Activated naive CD4-positive, alpha-beta T cell treated with anti-CD3 and anti-CD28 coated beads for 36 hours (primary cell): ENCODE measurements at regions of chr17 and their contacts with region 1.

Region 1: GRCh38 chr17:66200685-66201092 is 8.8 kb upstream of the CEP112 start:
- DNase-seq: peak; percentile 76
- H3K4me3 Mint-ChIP-seq: no peak overlapping the region
- H3K27ac Mint-ChIP-seq: no peak overlapping the region
- H3K4me1 Mint-ChIP-seq: peaks cover 16% of the 10 kb centered on the region
- H3K27me3 Mint-ChIP-seq: no peaks in the 10 kb centered on the region

Region 2: DNA sequence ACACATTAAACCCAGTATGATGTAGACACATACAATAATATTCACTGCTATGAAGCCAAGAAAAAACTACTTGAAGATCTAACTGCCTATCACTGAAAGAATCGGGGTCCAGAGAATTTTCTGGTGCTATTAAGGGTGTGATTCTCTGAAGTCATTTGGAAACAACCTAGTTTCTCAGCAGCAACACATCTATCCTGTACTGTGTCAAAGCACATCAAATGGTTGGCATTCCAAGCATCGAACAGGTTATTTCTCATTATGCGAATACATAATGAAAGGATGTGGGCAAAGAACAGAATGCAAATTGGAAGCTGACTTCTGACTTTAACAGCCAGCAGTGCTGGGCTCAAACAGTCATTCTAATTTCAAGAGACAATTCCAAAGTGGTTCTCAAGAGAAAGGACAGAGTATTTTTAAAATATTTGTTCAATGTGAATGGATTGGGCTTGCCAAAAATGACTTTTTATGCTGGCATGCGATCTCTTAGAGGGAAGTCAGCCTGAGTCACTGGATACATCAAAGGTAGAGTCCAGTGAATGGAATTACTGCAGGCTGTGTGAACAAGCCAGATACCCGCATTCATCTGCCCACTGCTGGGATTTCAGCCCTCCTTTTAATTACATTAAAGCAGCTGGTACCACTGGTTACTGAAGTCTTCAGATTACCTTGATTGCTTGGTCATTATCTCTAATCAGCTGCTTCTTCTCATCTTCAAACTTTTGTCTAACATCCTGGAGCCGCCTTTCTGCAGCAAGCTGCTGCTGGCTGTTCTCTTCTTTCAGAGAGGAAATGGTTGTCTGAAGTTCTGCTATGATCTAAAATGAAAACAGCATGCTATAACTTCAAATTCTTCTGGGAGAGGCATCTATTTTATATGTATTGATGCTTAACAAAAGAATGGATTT is 458.0 kb before region 1 on chr17:
- CTCF ChIA-PET with region 1: no interaction called
- intact Hi-C with region 1: no loop called
- DNase-seq: peak; percentile 14
- H3K4me3 Mint-ChIP-seq: no peak overlapping the region
- H3K27ac Mint-ChIP-seq: peak overlapping the region; percentile 39
- H3K4me1 Mint-ChIP-seq: peaks cover 22% of the 10 kb centered on the region
- H3K27me3 Mint-ChIP-seq: no peaks in the 10 kb centered on the region

Region 3: DNA sequence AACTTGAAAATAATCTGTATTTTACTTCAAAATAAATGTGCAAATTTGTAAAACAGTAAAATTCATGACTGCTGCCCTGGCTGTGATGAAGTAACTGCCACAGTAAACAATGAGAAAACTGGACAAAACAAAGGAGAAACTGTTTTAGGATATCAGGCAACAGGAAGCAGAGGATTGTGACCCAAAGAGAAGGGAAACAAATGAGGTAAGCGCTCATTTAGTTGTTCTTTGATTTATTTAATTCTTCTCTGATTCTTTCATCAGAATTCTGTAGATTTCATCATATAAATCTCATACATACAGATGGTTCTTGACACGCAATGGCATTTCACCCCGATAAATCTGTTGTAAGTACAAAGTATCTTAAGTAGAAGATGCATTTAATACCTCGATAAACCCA is 441.2 kb before region 1 on chr17:
- CTCF ChIA-PET with region 1: no interaction called
- intact Hi-C with region 1: no loop called
- DNase-seq: no peak
- H3K4me3 Mint-ChIP-seq: no peak overlapping the region
- H3K27ac Mint-ChIP-seq: no peak overlapping the region
- H3K4me1 Mint-ChIP-seq: no peaks in the 10 kb centered on the region
- H3K27me3 Mint-ChIP-seq: no peaks in the 10 kb centered on the region

Region 4: GRCh38 chr17:66248285-66248684 is 47.6 kb after region 1 on chr17:
- CTCF ChIA-PET with region 1: interaction called, 3 read pairs
- intact Hi-C with region 1: loop called (anchors 2 kb)
- DNase-seq: no peak
- H3K4me3 Mint-ChIP-seq: no peak overlapping the region
- H3K27ac Mint-ChIP-seq: no peak overlapping the region
- H3K4me1 Mint-ChIP-seq: peaks cover 22% of the 10 kb centered on the region
- H3K27me3 Mint-ChIP-seq: no peaks in the 10 kb centered on the region

Region 5: DNA sequence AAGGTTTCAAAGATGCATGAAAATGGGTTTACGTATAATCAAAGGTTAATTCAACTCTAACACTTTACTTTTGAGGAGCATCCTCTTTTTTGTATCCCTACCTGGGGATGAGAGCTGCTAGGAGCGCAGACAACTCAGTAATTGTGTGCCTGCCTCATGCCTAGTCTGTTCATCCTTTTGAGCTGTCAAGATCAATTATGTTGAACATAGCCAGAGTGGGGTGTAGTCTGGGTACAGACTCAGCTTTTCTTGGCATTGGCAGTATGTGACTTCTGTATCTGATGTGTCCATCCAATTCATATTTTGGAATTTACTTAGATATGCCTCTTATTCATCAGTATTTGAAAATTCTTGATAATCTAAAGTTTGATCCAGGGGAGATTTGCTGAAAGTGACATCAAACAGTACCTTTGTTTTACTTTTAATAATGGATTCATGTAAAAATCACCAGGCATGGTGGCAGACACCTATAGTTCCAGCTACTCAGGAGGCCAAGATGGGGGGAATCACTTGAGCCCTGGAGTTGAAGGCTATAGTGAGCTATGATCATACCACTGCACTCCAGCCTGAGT is 125.9 kb after region 1 on chr17:
- CTCF ChIA-PET with region 1: no interaction called
- intact Hi-C with region 1: no loop called
- DNase-seq: no peak
- H3K4me3 Mint-ChIP-seq: no peak overlapping the region
- H3K27ac Mint-ChIP-seq: peak overlapping the region; percentile 27
- H3K4me1 Mint-ChIP-seq: peaks cover 77% of the 10 kb centered on the region
- H3K27me3 Mint-ChIP-seq: no peaks in the 10 kb centered on the region

Region 6: GRCh38 chr17:66369830-66370229 is 169.1 kb after region 1 on chr17:
- CTCF ChIA-PET with region 1: no interaction called
- intact Hi-C with region 1: no loop called
- DNase-seq: no peak
- H3K4me3 Mint-ChIP-seq: no peak overlapping the region
- H3K27ac Mint-ChIP-seq: no peak overlapping the region
- H3K4me1 Mint-ChIP-seq: peaks cover 85% of the 10 kb centered on the region
- H3K27me3 Mint-ChIP-seq: no peaks in the 10 kb centered on the region

Region 7: GRCh38 chr17:66426397-66427033 is 225.8 kb after region 1 on chr17:
- CTCF ChIA-PET with region 1: interaction called, 3 read pairs
- intact Hi-C with region 1: loop called (anchors 1 kb)
- DNase-seq: peak; percentile 68
- H3K4me3 Mint-ChIP-seq: no peak overlapping the region
- H3K27ac Mint-ChIP-seq: peak overlapping the region; percentile 83
- H3K4me1 Mint-ChIP-seq: peaks cover 81% of the 10 kb centered on the region
- H3K27me3 Mint-ChIP-seq: no peaks in the 10 kb centered on the region

Region 8: GRCh38 chr17:66633317-66633965 is 432.8 kb after region 1 on chr17:
- CTCF ChIA-PET with region 1: no interaction called
- intact Hi-C with region 1: loop called (anchors 5 kb)
- DNase-seq: peak; percentile 78
- H3K4me3 Mint-ChIP-seq: no peak overlapping the region
- H3K27ac Mint-ChIP-seq: peak overlapping the region; percentile 44
- H3K4me1 Mint-ChIP-seq: peaks cover 62% of the 10 kb centered on the region
- H3K27me3 Mint-ChIP-seq: no peaks in the 10 kb centered on the region

Region 9: GRCh38 chr17:66715745-66716156 is 515.1 kb after region 1 on chr17:
- CTCF ChIA-PET with region 1: no interaction called
- intact Hi-C with region 1: loop called (anchors 5 kb)
- DNase-seq: peak; percentile 12
- H3K4me3 Mint-ChIP-seq: no peak overlapping the region
- H3K27ac Mint-ChIP-seq: no peak overlapping the region
- H3K4me1 Mint-ChIP-seq: peaks cover 22% of the 10 kb centered on the region
- H3K27me3 Mint-ChIP-seq: no peaks in the 10 kb centered on the region